ENCODE measurements at regions of chr1 and their contacts with region 1.

Region 1: DNA sequence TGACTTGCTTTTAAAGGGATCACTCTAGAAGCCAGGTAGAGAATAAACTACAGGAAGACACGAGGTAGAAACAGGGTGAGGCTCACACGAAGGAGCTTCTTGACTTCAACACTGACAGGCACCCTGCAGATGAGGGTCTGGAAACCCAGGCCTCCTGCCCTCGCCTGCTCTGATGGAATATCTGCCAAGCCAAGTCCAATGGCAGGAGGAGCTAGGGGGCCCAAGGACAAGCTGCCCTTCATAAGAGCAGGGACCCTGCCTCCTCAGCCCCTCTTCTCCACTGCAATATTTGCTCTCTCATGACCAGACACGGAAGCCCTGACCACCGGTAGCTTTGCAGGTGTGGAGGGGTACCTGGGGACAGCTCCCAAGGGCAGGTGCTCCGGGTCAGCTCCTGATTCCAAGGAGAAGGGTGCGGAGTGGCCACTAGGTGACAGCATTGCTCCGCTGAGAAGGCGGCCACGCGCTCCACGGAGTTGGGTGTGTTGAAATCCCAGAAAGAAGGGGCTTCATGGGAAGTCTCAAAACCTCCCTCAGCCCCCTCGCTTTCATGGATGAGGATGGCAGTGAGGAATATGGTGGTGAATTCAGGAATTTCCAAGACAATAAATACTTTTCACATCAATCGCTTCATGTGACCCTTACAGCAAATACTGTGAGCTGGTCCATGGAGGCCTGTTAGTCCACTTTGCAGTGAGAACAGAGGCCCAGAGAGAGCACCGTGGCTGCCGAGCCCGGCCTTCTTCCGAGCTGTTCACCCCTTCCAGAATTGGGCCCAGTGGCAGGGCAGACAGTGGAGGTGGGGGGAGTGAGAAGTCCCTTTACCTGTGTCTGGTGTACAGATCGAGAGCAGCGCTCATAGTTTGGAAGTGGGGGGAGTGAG is 33.2 kb upstream of the PAX7 start:
- DNase-seq: no peak
- H3K4me3 ChIP-seq: no peak overlapping the region
- H3K27ac ChIP-seq: no peak overlapping the region
- H3K4me1 ChIP-seq: no peaks in the 10 kb centered on the region
- H3K27me3 ChIP-seq: peaks cover 0 to 71% (median 0%) of the 10 kb centered on the region in 4 donors
- CTCF ChIP-seq: peak; percentile 77 to 93 (median 88)
- POLR2A ChIP-seq: no peak

Region 2: DNA sequence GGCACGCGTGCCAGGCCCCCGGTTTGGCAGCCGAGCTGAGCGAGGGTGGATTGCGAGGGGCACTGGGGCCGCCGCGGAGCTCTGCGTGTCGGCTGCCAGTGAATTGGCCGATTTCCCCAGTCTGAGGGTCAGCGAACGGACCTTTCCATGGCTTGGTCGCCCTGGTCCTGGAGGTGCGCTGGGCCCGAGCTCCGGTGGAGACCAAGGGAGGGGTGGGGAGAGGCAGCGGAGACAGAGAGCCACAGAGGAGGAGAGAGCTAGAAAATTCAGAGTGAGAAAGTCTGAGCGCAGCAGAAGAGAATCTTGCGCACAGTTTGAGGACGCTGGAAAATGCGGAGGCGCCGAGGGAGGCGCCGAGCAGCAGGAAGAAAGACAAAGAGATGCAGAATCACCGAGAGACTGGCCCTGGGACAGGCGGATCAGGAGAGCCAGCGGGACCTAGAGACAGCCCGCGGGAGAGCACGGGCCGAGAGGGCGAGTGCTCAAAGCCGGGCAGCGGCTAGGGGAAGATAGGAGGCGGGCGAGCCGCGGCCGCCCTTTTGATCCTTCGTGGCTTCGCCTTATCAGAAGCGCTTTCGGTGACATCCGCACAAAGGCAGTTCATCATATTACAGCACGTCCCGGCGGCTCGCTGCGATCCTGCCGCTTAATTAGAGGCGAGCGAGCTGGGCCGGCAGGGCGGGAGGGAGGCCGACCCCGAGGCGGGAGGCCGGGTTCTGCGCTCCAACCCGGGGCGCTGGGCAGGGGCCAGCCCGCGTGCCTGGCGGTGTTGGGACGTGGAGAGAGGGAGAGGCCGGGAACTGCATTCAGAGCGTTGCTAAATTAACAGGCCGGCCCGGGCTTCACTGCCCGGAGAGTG is 46.0 kb after region 1 on chr1:
- intact Hi-C with region 1: no loop called
- DNase-seq: no peak
- H3K4me3 ChIP-seq: peak overlapping the region in 2 of 4 donors; percentile 2 to 46
- H3K27ac ChIP-seq: no peak overlapping the region
- H3K4me1 ChIP-seq: peaks cover 14 to 50% (median 14%) of the 10 kb centered on the region in 3 donors
- H3K27me3 ChIP-seq: peaks cover 46 to 100% (median 83%) of the 10 kb centered on the region in 4 donors
- CTCF ChIP-seq: no peak
- POLR2A ChIP-seq: no peak

Region 3: GRCh38 chr1:18681423-18681835 is 84.0 kb after region 1 on chr1:
- intact Hi-C with region 1: loop called (anchors 5 kb)
- DNase-seq: no peak
- H3K4me3 ChIP-seq: no peak overlapping the region
- H3K27ac ChIP-seq: no peak overlapping the region
- H3K4me1 ChIP-seq: no peaks in the 10 kb centered on the region
- H3K27me3 ChIP-seq: peaks cover 0 to 89% (median 0%) of the 10 kb centered on the region in 4 donors
- CTCF ChIP-seq: peak; percentile 27 to 73 (median 54)
- POLR2A ChIP-seq: no peak

Region 4: DNA sequence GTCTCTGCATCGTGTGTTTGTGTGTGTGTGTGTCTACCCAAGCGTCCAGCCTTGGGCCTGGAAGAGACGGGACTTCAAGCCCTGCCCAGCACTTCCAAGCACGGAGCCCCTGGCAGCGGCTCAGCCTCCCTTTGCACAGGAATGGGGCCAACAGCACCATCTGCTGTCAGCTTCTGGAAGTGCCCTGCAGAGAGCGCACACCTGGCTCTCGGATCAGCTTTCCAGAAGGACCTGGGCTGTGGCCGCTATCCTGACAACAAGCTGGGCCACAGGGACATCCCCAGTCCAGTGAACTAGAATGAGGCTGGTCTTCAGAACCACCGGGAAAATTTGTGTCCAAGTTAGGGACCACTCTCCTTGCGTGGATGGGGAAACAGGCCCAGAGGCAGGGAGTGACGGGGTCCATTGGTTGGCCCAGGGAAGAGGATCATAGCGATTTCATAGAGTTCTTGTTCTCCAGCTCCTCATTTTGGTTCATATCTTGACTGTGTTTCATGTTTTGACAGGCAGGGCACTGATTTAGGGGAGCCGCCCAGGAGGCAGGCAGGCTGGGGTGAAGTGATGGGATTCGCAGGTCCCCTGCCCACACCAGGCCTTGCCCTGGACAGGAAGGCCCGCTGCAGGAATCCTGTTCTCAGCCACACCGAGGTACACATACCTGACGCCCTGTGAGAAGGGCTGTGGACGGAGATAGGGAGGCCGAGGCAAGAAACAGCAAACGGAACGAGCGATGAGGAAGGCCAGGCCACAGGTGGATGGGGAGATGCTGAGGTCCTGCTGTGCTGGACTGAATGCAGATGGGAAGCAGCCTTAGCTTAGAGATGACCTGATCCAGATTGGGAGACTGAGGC is 223.6 kb after region 1 on chr1:
- intact Hi-C with region 1: loop called (anchors 5 kb)
- DNase-seq: no peak
- H3K4me3 ChIP-seq: no peak overlapping the region
- H3K27ac ChIP-seq: no peak overlapping the region
- H3K4me1 ChIP-seq: peaks cover 0 to 5% (median 0%) of the 10 kb centered on the region in 3 donors
- H3K27me3 ChIP-seq: peaks cover 0 to 58% (median 2%) of the 10 kb centered on the region in 4 donors
- CTCF ChIP-seq: peak; percentile 46 to 89 (median 86)
- POLR2A ChIP-seq: no peak

Measured in esophagus squamous epithelium (tissue), 5 donors.